ENCODE measurements at regions of chr6 and their contacts with region 1.

Region 1: DNA sequence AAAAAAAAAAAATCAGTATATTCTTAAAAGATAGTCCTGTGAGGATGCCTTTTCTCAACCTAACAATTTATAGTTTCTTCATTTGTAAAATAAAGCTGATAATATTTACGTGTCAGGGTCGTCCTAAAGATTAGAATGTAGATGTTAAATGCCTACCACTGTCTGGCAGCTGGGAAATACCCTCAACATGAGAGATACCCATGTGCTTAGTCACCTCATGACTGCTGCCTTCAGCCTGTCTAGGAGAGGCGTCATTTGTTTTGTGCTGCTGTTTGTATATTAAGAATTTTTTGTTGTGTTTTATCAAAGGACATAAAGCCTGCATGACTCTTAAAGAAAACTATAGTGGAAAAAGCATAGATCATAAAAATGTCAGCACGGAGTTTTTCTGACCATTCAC is 9.5 kb downstream of the FAM120B start:
- H3K4me3 Mint-ChIP-seq: no peak overlapping the region
- H3K27ac Mint-ChIP-seq: no peak overlapping the region
- H3K4me1 Mint-ChIP-seq: peaks cover 39% of the 10 kb centered on the region
- H3K27me3 Mint-ChIP-seq: no peaks in the 10 kb centered on the region

Region 2: DNA sequence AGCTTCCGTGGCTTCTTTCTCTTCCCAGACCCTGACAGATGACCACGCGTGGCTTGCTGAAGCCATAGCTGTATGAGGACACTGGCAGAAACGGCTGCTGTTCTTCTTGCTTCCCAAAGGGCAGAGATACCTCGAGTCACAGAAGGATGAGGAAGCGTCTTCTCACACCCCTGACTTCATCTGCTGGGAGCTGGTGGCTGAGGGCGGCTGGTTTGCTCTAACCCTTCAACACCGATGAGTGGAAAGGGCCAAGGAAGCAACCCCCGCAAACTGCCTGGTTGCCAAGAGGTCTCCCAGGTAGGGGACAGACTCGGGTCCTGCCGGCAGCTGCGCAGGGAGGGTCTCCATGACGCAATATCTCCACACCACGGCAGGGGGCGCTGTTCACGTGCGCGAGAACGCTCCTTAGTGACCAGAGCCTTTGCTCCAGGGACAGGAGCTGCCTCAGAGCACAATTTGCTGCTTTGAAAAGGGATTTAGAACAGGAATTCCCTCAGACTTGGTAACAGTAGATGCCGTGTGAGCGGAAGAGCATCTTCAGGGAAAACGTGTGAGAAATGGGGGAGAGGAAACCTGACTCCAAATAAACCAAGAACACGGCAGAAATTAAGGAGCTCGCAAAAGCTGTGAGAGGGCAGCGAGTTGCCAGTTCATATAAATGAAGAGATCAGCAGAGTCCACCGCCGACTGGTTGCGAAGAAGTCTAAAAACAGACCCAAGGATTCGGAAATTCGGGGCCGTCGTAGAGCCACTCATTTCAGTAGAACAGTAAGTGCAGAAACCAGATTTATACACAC is 484.4 kb before region 1 on chr6:
- intact Hi-C with region 1: loop called (anchors 10 kb)
- H3K4me3 Mint-ChIP-seq: no peak overlapping the region
- H3K27ac Mint-ChIP-seq: no peak overlapping the region
- H3K4me1 Mint-ChIP-seq: peaks cover 7% of the 10 kb centered on the region
- H3K27me3 Mint-ChIP-seq: peaks cover 25% of the 10 kb centered on the region